Tibial artery (tissue), 4 donors: ENCODE measurements at regions of chr11 and their contacts with region 1.

Region 1: GRCh38 chr11:114307524-114308203 is 11.5 kb downstream of the NNMT start:
- DNase-seq: peak; percentile 85 to 94
- H3K4me3 ChIP-seq: peak overlapping the region; percentile 31 to 43
- H3K27ac ChIP-seq: peak overlapping the region; percentile 83 to 85
- H3K4me1 ChIP-seq: peaks cover 3 to 91% (median 59%) of the 10 kb centered on the region in 4 donors
- H3K27me3 ChIP-seq: no peaks in the 10 kb centered on the region
- CTCF ChIP-seq: no peak

Region 2: GRCh38 chr11:114159802-114160632 is 147.6 kb before region 1 on chr11:
- intact Hi-C with region 1: loop called (anchors 10 kb)
- DNase-seq: peak; percentile 100
- H3K4me3 ChIP-seq: peak overlapping the region; percentile 34
- H3K27ac ChIP-seq: peak overlapping the region; percentile 94 to 95
- H3K4me1 ChIP-seq: peaks cover 26 to 98% (median 94%) of the 10 kb centered on the region in 4 donors
- H3K27me3 ChIP-seq: no peaks in the 10 kb centered on the region
- CTCF ChIP-seq: peak in 1 of 2 experiments; percentile 4

Region 3: DNA sequence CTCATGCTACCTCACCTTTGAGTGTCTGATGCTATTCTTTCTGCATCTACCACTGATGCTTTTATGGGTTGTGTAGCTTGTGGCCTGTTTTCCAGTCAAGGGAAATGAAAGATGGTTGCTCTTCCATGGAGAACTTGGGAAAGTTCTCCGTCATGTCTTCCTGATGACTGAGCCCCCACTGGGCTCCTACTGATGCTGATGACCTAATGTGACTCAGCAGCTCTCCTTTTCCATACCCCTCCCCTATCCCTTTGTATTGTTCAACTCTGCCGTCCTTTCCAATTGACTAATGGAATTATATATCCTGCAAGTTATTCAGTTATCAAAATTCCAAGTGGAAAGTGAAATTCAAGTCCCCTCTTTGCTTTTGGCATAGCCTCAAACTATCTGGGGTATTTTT is 176.3 kb after region 1 on chr11:
- intact Hi-C with region 1: no loop called
- DNase-seq: no peak
- H3K4me3 ChIP-seq: no peak overlapping the region
- H3K27ac ChIP-seq: no peak overlapping the region
- H3K4me1 ChIP-seq: no peaks in the 10 kb centered on the region
- H3K27me3 ChIP-seq: no peaks in the 10 kb centered on the region
- CTCF ChIP-seq: no peak

Region 4: GRCh38 chr11:114496915-114497314 is 189.3 kb after region 1 on chr11:
- intact Hi-C with region 1: no loop called
- DNase-seq: no peak
- H3K4me3 ChIP-seq: no peak overlapping the region
- H3K27ac ChIP-seq: no peak overlapping the region
- H3K4me1 ChIP-seq: no peaks in the 10 kb centered on the region
- H3K27me3 ChIP-seq: no peaks in the 10 kb centered on the region
- CTCF ChIP-seq: no peak